Activated CD4-positive, alpha-beta T cell treated with anti-CD3 and anti-CD28 coated beads for 36 hours (primary cell): ENCODE measurements at regions of chr3 and their contacts with region 1.

Region 1: DNA sequence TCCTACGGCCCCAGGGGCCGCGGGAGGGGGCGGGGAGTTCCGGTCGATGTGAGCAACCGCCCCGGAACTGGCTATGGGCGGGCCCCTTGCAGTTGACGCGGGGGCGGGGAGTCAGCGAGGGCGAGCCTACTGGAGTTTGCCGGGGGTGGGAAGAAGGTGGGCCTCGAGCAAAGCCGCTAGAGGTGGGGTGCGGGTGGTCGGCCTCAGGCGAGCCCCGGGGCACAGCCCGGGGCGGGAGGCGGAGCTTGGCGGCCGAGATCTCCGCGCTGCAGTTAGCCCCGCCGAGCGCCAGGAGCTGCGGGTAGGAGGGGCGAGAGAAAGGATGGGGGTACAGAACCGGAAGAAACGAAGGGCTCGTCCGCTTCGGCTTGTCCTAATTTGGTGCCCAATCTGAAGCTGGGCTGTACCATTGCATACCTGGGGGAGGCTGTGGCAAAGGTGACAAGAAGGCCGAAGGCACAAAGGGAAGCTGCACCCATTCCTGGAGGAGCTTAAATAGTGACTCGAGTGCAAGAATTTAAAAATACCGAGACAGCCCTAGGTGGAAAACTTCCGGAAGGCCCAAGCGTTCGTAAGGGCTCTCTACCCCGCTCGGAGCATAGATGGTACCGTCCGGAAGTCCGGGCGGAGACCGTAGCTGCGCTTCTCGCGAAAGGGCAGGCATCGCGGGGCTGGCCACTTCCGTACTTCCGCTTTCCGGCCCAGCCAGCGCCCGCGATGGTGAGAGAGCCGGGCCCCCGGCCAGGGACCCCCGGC is at the starts of genes ARPC4 and TADA3:
- DNase-seq: peak; percentile 95
- ATAC-seq: peak; percentile 79
- H3K4me3 Mint-ChIP-seq: peak within 1 kb of the TSS; percentile 99
- H3K27ac Mint-ChIP-seq: peak within 1 kb of the TSS; percentile 100
- H3K4me1 Mint-ChIP-seq: peaks cover 73% of the 10 kb centered on the region
- H3K27me3 Mint-ChIP-seq: no peaks in the 10 kb centered on the region
- total RNA-seq, gene ARPC4: 164 to 231 TPM
- total RNA-seq, gene TADA3: 80.7 to 96.4 TPM

Region 2: GRCh38 chr3:9649791-9650521 is 142.6 kb before region 1 on chr3:
- CTCF ChIA-PET with region 1: no interaction called
- POLR2A ChIA-PET with region 1: no interaction called
- intact Hi-C with region 1: loop called (anchors 1 kb)
- DNase-seq: no peak
- ATAC-seq: peak; percentile 1
- H3K4me3 Mint-ChIP-seq: peak overlapping the region; percentile 95
- H3K27ac Mint-ChIP-seq: peak overlapping the region; percentile 92
- H3K4me1 Mint-ChIP-seq: peaks cover 24% of the 10 kb centered on the region
- H3K27me3 Mint-ChIP-seq: no peaks in the 10 kb centered on the region

Region 3: GRCh38 chr3:9779721-9780457 is 12.7 kb before region 1 on chr3:
- CTCF ChIA-PET with region 1: interaction called, 11 read pairs
- POLR2A ChIA-PET with region 1: interaction called, 13 read pairs
- intact Hi-C with region 1: loop called (anchors 1 kb)
- DNase-seq: peak; percentile 56
- ATAC-seq: peak; percentile 22
- H3K4me3 Mint-ChIP-seq: no peak overlapping the region
- H3K27ac Mint-ChIP-seq: peak overlapping the region; percentile 95
- H3K4me1 Mint-ChIP-seq: peaks cover 61% of the 10 kb centered on the region
- H3K27me3 Mint-ChIP-seq: no peaks in the 10 kb centered on the region

Region 4: GRCh38 chr3:9890249-9891071 is 97.9 kb after region 1 on chr3 and contains the start of gene JAGN1:
- CTCF ChIA-PET with region 1: no interaction called
- POLR2A ChIA-PET with region 1: no interaction called
- intact Hi-C with region 1: loop called (anchors 1 to 5 kb)
- DNase-seq: peak; percentile 96
- ATAC-seq: peak; percentile 82
- H3K4me3 Mint-ChIP-seq: peak within 1 kb of the TSS; percentile 96
- H3K27ac Mint-ChIP-seq: peak within 1 kb of the TSS; percentile 98
- H3K4me1 Mint-ChIP-seq: peaks cover 34% of the 10 kb centered on the region
- H3K27me3 Mint-ChIP-seq: no peaks in the 10 kb centered on the region
- total RNA-seq, gene JAGN1: 27.1 to 33.0 TPM

Region 5: DNA sequence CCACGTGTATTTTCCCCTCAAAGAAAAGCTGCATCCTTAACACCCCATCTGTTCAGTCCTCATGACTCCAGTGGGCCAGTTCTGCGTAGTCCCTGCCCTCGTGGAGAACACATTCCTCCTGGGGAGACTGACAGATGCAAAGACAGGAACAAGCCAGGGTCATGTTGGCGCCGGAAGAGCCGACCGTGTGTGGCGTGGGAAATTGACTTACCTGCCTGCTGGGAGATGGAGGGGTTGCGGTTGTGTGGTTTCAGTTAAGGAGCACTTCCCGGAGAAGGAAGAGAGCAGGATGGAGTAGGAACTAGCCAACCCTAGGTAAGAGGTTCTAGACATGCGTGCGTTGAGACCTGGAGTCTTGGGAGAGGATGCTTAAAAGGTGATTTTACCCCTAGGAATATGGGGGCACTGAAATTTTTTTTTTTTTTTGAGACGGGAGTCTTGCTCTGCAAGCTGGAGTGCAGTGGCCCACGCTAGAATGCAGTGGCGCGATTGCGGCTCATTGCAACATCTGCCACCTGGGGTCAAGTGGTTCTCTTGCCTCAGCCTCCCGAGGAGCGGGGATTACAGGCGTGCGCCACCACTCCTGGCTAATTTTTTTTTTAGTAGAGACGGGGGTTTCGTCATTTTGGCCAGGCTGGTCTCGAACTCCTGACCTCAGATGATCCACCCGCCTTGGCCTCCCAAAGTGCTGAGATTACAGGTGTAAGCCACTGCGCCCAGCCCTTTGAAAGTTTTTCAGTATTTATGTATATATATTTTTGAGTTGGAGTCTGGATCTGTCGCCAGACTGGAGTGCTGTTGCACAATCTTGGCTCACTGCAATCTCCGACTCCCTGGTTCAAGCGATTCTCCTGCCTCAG is 350.4 kb after region 1 on chr3:
- CTCF ChIA-PET with region 1: no interaction called
- POLR2A ChIA-PET with region 1: no interaction called
- intact Hi-C with region 1: loop called in 1 of 2 experiments (anchors 1 kb)
- DNase-seq: peak; percentile 57
- ATAC-seq: peak; percentile 15
- H3K4me3 Mint-ChIP-seq: peak overlapping the region; percentile 97
- H3K27ac Mint-ChIP-seq: peak overlapping the region; percentile 89
- H3K4me1 Mint-ChIP-seq: peaks cover 28% of the 10 kb centered on the region
- H3K27me3 Mint-ChIP-seq: no peaks in the 10 kb centered on the region

Region 6: DNA sequence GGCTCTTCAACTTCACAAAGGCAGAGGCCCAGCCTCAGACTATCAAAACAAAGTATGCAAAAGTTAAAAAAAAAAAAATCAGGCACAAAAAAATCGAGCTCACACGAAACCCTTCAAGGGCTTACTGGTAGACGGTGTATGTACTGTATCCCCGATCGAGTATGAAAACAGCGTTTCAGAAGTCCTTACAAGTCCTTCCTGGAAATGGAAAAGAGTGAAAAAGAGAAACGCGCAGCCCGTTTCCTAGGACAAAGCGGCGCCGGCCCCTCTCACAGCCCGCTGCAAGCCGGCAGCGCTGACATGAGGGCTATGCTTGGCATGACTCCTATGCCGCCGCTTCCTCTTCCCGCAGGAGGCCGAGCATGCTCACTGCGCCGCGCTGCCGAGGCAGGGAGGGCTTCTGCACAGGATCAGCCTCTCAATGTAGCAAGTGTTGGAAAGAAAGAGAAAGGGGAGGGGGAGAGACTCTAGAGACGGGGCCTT is 1851.1 kb after region 1 on chr3 and contains the start of gene VGLL4:
- CTCF ChIA-PET with region 1: no interaction called
- POLR2A ChIA-PET with region 1: no interaction called
- intact Hi-C with region 1: loop called in 1 of 2 experiments (anchors 5 kb)
- DNase-seq: peak; percentile 85
- ATAC-seq: peak; percentile 74
- H3K4me3 Mint-ChIP-seq: peak within 1 kb of the TSS; percentile 99
- H3K27ac Mint-ChIP-seq: peak within 1 kb of the TSS; percentile 99
- H3K4me1 Mint-ChIP-seq: peaks cover 33% of the 10 kb centered on the region
- H3K27me3 Mint-ChIP-seq: no peaks in the 10 kb centered on the region
- total RNA-seq, gene VGLL4: 24.4 to 24.9 TPM